Psoas muscle (tissue), 8 donors: ENCODE measurements at regions of chr11 and their contacts with region 1.

Region 1: DNA sequence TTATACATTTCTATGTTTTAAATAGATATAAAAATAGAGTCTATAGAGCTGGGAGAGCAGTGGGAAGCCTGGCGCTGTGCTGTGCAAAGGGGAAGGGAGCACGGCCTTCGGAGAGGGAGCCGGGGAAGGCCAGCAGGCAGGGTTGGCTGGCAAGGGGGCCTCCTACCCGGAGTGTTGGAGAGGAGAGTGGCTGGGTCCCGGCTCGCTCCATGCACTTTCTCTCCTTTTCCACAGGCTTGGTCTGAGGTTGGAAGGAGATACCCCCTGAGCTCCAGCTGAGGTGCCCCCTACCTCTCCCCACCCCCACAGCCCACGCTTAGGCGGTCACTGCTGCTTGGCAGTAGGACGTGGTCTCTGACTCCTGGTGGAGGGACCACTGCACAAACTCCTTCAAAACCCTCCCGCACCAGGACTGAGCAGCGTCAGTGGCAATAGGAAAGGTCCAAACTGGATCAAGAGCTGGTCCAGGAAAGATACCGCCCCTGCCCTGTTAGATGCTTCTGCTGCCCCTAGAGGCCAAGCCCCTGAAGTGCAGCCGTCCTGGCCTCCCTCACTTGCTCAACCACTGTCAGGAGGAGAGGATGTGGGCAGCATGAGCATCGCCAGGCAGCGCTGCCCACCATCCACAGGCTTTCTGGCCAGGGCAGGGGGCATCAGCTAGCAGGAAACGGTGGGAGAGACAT is 52.9 kb downstream of the SYT13 start:
- DNase-seq: peak; percentile 69 to 83
- ATAC-seq: peak; percentile 74 to 96 (median 86)
- H3K4me3 ChIP-seq: no peak overlapping the region
- H3K27ac ChIP-seq: no peak overlapping the region
- H3K4me1 ChIP-seq: no peaks in the 10 kb centered on the region
- H3K27me3 ChIP-seq: no peaks in the 10 kb centered on the region
- CTCF ChIP-seq: peak; percentile 77

Region 2: DNA sequence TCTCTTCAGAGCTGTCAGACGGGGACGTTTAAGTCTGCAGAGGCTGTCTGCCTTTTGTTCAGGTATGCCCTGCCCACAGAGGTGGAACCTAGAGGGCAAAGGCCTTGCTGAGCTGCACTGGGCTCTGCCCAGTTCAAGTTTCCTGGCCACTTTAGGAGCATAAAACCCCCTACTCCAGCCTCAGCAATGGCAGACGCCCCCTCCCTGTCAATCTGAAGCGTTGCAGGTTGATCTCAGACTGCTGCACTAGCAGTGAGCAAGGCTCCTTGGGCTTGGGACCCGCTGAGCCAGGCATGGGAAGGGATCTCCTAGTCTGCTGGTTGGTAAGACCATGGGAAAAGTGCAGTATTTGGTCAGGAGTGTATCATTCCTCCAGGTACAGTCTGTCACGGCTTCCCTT is 215.9 kb before region 1 on chr11:
- intact Hi-C with region 1: no loop called
- DNase-seq: no peak
- ATAC-seq: no peak
- H3K4me3 ChIP-seq: no peak overlapping the region
- H3K27ac ChIP-seq: no peak overlapping the region
- H3K4me1 ChIP-seq: peaks cover 17% of the 10 kb centered on the region
- H3K27me3 ChIP-seq: no peaks in the 10 kb centered on the region
- CTCF ChIP-seq: no peak

Region 3: GRCh38 chr11:45110562-45110961 is 122.7 kb before region 1 on chr11:
- intact Hi-C with region 1: loop called in 1 of 2 experiments (anchors 5 kb)
- DNase-seq: peak in 1 of 2 donors; percentile 45
- ATAC-seq: peak; percentile 80 to 87 (median 84)
- H3K4me3 ChIP-seq: no peak overlapping the region
- H3K27ac ChIP-seq: no peak overlapping the region
- H3K4me1 ChIP-seq: no peaks in the 10 kb centered on the region
- H3K27me3 ChIP-seq: peaks cover 0 to 7% (median 0%) of the 10 kb centered on the region in 3 donors
- CTCF ChIP-seq: peak; percentile 86

Region 4: DNA sequence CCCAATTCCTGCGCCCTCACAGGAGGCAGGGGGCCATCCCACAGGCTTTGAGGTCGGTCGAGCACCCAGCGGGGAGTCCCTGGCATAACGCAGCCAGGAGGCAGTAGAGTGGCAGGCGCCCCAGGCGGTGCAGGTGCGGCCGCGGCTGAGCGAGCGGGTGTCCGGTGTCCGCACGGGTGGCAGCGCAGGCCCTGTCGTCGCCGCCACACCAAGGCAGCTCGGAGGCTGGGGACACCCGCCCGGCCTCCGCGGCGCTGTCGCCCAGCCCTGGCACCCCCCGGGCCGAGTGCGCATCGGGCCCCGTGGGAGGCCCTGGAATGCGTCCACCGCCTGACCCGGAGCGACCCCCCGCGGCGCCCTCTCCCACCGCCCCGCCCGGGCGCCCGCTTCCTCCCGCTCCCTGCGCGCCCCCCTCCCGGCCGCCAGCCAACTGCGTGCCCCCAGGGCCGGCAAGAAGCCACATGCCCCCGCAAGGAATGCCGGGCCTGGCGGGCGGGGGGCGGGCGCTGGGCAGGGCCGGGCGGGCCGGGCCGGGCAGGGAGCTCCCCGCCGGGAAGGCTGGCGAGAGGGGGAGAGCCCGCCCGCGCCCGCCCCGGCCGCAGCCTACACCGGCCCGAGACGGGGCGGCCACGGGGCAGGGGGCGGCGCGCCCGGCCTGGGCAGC is 53.0 kb before region 1 on chr11:
- intact Hi-C with region 1: loop called in 1 of 2 experiments (anchors 5 kb)
- DNase-seq: peak; percentile 68 to 86
- ATAC-seq: peak; percentile 83 to 88 (median 84)
- H3K4me3 ChIP-seq: peak overlapping the region; percentile 71
- H3K27ac ChIP-seq: peak overlapping the region; percentile 83
- H3K4me1 ChIP-seq: peaks cover 6% of the 10 kb centered on the region
- H3K27me3 ChIP-seq: no peaks in the 10 kb centered on the region
- CTCF ChIP-seq: peak; percentile 53

Region 5: GRCh38 chr11:45267052-45267451 is 33.8 kb after region 1 on chr11:
- intact Hi-C with region 1: no loop called
- DNase-seq: no peak
- ATAC-seq: no peak
- H3K4me3 ChIP-seq: no peak overlapping the region
- H3K27ac ChIP-seq: no peak overlapping the region
- H3K4me1 ChIP-seq: no peaks in the 10 kb centered on the region
- H3K27me3 ChIP-seq: peaks cover 0 to 14% (median 4%) of the 10 kb centered on the region in 3 donors
- CTCF ChIP-seq: no peak